WTC11 (cell line): ENCODE measurements at regions of chr9 and their contacts with region 1.

Region 1: GRCh38 chr9:129737479-129738274 is 15.2 kb downstream of the PTGES start:
- DNase-seq: peak; percentile 90
- ATAC-seq: peak; percentile 85
- H3K4me3 Mint-ChIP-seq: peak overlapping the region; percentile 61
- H3K27ac Mint-ChIP-seq: no peak overlapping the region
- H3K4me1 Mint-ChIP-seq: peaks cover 5% of the 10 kb centered on the region; the same call in 1 of the 2 replicates
- H3K27me3 Mint-ChIP-seq: no peaks in the 10 kb centered on the region; the same call in 1 of the 2 replicates
- CTCF ChIP-seq: peak; percentile 98

Region 2: GRCh38 chr9:129656795-129657390 is 80.8 kb before region 1 on chr9:
- CTCF ChIA-PET with region 1: interaction called, 10 read pairs
- POLR2A ChIA-PET with region 1: no interaction called
- DNase-seq: no peak
- ATAC-seq: no peak
- H3K4me3 Mint-ChIP-seq: no peak overlapping the region
- H3K27ac Mint-ChIP-seq: no peak overlapping the region
- H3K4me1 Mint-ChIP-seq: no peaks in the 10 kb centered on the region
- H3K27me3 Mint-ChIP-seq: peaks cover 6% of the 10 kb centered on the region
- CTCF ChIP-seq: no peak

Region 3: GRCh38 chr9:129696938-129697650 is 40.6 kb before region 1 on chr9:
- CTCF ChIA-PET with region 1: interaction called, 14 read pairs
- POLR2A ChIA-PET with region 1: no interaction called
- DNase-seq: peak; percentile 44
- ATAC-seq: peak; percentile 68
- H3K4me3 Mint-ChIP-seq: peak overlapping the region; percentile 91
- H3K27ac Mint-ChIP-seq: no peak overlapping the region
- H3K4me1 Mint-ChIP-seq: peaks cover 10% of the 10 kb centered on the region
- H3K27me3 Mint-ChIP-seq: peaks cover 13% of the 10 kb centered on the region
- CTCF ChIP-seq: no peak

Region 4: GRCh38 chr9:129726322-129727160 is 11.1 kb before region 1 on chr9:
- CTCF ChIA-PET with region 1: interaction called, 99 read pairs
- POLR2A ChIA-PET with region 1: interaction called, 9 read pairs
- DNase-seq: peak; percentile 89
- ATAC-seq: peak; percentile 99
- H3K4me3 Mint-ChIP-seq: 0 out of 2 replicates have a peak overlapping the region, but pooled peaks have one; percentile 13
- H3K27ac Mint-ChIP-seq: no peak overlapping the region
- H3K4me1 Mint-ChIP-seq: peaks cover 6% of the 10 kb centered on the region
- H3K27me3 Mint-ChIP-seq: no peaks in the 10 kb centered on the region
- CTCF ChIP-seq: peak; percentile 95

Region 5: DNA sequence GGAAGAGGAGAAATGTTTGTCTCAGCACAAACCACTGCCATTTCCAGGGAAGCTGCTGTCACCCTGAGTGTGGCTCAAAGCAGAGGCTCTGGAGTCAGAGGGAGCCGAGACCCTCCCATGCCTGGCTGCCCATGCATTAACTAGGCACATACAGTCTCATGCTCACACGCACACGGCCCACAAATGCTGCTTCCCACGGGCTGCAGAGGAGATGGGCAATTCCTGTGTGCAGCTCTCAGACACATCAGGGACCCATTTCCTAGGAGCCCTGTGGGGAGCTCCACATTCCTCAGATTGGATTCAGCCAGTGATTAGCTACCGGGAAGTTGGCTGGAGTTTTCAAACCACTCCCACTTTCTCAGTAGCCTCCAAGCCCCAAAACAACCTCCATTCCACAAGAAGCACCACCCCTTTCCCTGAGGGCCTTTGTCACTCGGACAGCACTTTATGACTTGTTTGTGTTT is 24.3 kb after region 1 on chr9:
- CTCF ChIA-PET with region 1: interaction called, 21 read pairs
- POLR2A ChIA-PET with region 1: no interaction called
- DNase-seq: no peak
- ATAC-seq: peak; percentile 73
- H3K4me3 Mint-ChIP-seq: no peak overlapping the region
- H3K27ac Mint-ChIP-seq: no peak overlapping the region
- H3K4me1 Mint-ChIP-seq: peaks cover 6% of the 10 kb centered on the region
- H3K27me3 Mint-ChIP-seq: no peaks in the 10 kb centered on the region
- CTCF ChIP-seq: no peak

Region 6: DNA sequence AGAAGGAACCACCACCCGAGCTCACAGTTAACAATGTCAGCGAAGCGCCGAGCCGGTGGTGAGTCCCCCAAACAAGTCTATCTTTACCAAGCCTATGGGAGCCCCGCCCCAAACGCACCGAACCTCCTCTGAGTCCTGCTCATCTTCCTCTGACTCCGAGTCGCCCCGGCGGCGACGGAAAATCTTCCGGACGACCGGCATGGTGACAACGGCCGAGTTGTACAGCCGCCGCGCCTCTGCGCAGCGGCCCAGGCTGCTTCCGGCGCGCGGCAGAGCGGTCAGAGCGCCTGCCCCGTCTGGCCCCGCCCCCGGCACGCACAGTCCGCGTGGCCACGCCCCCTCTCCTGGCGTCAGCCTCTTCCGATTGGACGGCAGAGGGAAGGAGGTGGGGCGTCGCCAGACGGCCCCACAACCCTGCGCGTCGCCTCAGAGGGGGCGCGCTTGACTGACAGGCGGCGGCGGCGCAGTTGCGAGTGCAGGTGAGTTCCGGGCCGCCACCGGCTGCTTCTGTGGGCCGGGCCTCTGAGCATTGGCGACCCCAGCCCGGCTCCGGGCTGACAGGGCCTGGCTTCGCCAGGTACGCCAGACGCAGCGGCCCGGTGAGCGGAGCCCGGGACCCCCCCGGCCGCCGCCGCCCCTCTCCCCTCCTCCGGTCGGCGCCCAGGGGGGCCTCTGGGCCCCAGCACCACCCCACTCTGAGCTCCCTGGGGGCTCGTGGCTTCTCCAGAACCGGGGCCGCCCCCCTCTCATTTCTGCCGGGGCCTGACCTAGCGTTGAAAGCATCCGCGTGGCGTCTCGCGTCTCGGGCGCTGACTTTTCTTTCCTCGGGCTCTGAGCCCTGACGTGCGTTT is 97.6 kb after region 1 on chr9 and contains the starts of genes C9orf78 and USP20:
- CTCF ChIA-PET with region 1: no interaction called
- POLR2A ChIA-PET with region 1: no interaction called
- DNase-seq: peak; percentile 97
- ATAC-seq: peak; percentile 96
- H3K4me3 Mint-ChIP-seq: peak within 1 kb of the TSS; percentile 99
- H3K27ac Mint-ChIP-seq: peak within 1 kb of the TSS; percentile 98
- H3K4me1 Mint-ChIP-seq: peaks cover 55% of the 10 kb centered on the region
- H3K27me3 Mint-ChIP-seq: no peaks in the 10 kb centered on the region
- CTCF ChIP-seq: no peak
- total RNA-seq, gene C9orf78: 34.1 to 36.8 TPM (median 36.4 TPM) in 3 replicates
- total RNA-seq, gene USP20: 23.7 to 29.3 TPM (median 24.0 TPM) in 3 replicates